WTC11 (cell line): ENCODE measurements at regions of chr12 and their contacts with region 1.

Region 1: GRCh38 chr12:106919910-106920544 is 35.7 kb upstream of the TMEM263 start:
- DNase-seq: no peak
- ATAC-seq: no peak
- H3K4me3 Mint-ChIP-seq: peak overlapping the region; percentile 45
- H3K27ac Mint-ChIP-seq: no peak overlapping the region
- H3K4me1 Mint-ChIP-seq: peaks cover 28% of the 10 kb centered on the region
- H3K27me3 Mint-ChIP-seq: peaks cover 12% of the 10 kb centered on the region
- CTCF ChIP-seq: peak; percentile 63

Region 2: GRCh38 chr12:106345739-106346138 is 574.3 kb before region 1 on chr12:
- CTCF ChIA-PET with region 1: interaction called, 12 read pairs
- POLR2A ChIA-PET with region 1: no interaction called
- DNase-seq: peak; percentile 41
- ATAC-seq: peak; percentile 100
- H3K4me3 Mint-ChIP-seq: no peak overlapping the region
- H3K27ac Mint-ChIP-seq: no peak overlapping the region
- H3K4me1 Mint-ChIP-seq: 0 out of 2 replicates have a peak, but pooled peaks cover 3% of the 10 kb centered on the region
- H3K27me3 Mint-ChIP-seq: no peaks in the 10 kb centered on the region
- CTCF ChIP-seq: no peak

Region 3: GRCh38 chr12:106386813-106387535 is 533.1 kb before region 1 on chr12:
- CTCF ChIA-PET with region 1: interaction called, 15 read pairs
- POLR2A ChIA-PET with region 1: no interaction called
- DNase-seq: no peak
- ATAC-seq: no peak
- H3K4me3 Mint-ChIP-seq: no peak overlapping the region
- H3K27ac Mint-ChIP-seq: no peak overlapping the region
- H3K4me1 Mint-ChIP-seq: peaks cover 7% of the 10 kb centered on the region
- H3K27me3 Mint-ChIP-seq: no peaks in the 10 kb centered on the region
- CTCF ChIP-seq: no peak

Region 4: GRCh38 chr12:106581543-106582248 is 338.3 kb before region 1 on chr12:
- CTCF ChIA-PET with region 1: interaction called, 20 read pairs
- POLR2A ChIA-PET with region 1: no interaction called
- DNase-seq: peak; percentile 83
- ATAC-seq: peak; percentile 37
- H3K4me3 Mint-ChIP-seq: peak overlapping the region; percentile 71
- H3K27ac Mint-ChIP-seq: peak overlapping the region; percentile 30; the same call in 1 of the 2 replicates
- H3K4me1 Mint-ChIP-seq: peaks cover 33% of the 10 kb centered on the region
- H3K27me3 Mint-ChIP-seq: peaks cover 93% of the 10 kb centered on the region
- CTCF ChIP-seq: no peak

Region 5: DNA sequence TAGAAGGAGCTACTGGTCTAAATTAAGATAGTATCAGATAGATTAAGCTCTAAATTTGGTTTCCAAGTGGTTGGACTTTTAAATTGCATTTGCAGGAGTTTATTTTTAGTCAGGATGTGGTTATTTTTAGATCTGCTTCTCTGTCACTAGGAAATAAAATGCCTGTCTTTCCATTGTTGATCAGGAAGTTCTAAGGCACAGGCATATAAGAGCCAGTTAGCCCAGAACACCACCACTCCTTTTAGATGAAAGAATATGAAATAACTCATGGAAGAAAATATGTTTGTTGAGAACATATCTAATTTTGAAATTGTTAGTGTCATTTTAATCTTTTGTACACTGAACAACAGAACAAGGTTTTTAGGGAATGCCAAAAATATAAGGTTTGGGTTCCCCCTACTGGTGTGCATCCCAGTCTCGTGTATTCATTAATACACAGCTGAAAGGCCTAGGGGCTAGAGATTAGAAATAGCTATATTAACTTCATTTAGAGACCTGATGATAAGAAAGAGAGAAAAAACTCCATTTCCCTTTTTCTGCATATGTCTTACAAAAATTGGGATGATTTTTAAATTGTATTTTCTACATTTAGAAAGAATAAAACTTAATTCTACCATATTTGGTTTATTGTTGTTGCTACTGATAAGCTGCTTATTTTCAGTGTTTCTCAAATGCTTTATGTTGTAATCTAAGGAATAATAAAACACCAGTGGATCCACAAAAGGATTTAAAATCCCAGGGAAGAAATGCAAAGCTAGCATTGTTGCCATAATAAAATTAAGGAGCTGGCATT is 78.3 kb before region 1 on chr12:
- CTCF ChIA-PET with region 1: interaction called, 49 read pairs
- POLR2A ChIA-PET with region 1: no interaction called
- DNase-seq: no peak
- ATAC-seq: peak; percentile 22; the same call in 1 of the 2 replicates
- H3K4me3 Mint-ChIP-seq: no peak overlapping the region
- H3K27ac Mint-ChIP-seq: no peak overlapping the region
- H3K4me1 Mint-ChIP-seq: peaks cover 31% of the 10 kb centered on the region
- H3K27me3 Mint-ChIP-seq: no peaks in the 10 kb centered on the region
- CTCF ChIP-seq: peak; percentile 17; the same call in 1 of the 2 replicates

Region 6: DNA sequence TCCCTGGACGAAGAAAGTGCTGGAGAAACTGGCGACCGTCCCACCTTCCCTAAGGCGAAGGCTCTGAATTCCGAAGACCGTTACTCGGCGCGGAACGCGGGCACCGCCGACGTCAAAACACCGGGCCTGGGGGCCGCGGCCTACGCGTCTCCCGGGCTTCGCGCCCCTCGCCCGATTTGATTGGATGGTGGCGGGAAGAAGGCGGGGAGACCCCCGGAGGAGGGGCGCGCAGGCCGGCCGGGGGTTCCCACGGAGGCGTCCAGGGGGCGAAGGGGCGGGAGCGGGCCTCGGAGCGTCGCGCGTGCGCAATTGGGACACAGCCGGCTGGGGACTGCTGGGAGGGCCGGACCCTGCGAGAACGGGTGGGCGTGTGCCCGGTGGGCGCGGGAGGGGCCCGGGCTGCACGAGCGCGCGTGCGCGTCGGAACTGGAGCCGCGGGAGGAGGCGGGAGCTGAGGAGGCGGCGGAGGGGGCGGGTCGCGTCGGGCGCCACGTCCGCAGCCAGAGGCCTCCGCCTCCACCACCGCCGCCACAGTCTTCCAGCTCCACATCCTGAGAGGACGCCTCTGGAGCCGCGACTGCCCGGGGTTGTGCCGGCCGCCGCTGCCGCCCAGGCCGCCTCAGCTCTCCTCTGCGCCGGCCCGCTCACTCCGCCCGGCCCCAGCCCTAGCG is 35.5 kb after region 1 on chr12 and contains the start of gene TMEM263:
- CTCF ChIA-PET with region 1: interaction called, 18 read pairs
- POLR2A ChIA-PET with region 1: interaction called, 4 read pairs
- DNase-seq: peak; percentile 89
- ATAC-seq: peak; percentile 79
- H3K4me3 Mint-ChIP-seq: peak within 1 kb of the TSS; percentile 97
- H3K27ac Mint-ChIP-seq: peak within 1 kb of the TSS; percentile 94
- H3K4me1 Mint-ChIP-seq: peaks cover 8% of the 10 kb centered on the region
- H3K27me3 Mint-ChIP-seq: peaks cover 41% of the 10 kb centered on the region
- CTCF ChIP-seq: no peak
- total RNA-seq, gene TMEM263: 15.2 to 18.0 TPM (median 16.8 TPM) in 3 replicates